ENCODE measurements at regions of chr16 and their contacts with region 1.

Region 1: GRCh38 chr16:27972500-27972899 is 91.0 kb downstream of the GSG1L start:
- DNase-seq: peak; percentile 77
- H3K4me3 Mint-ChIP-seq: no peak overlapping the region
- H3K27ac Mint-ChIP-seq: no peak overlapping the region
- H3K4me1 Mint-ChIP-seq: no peaks in the 10 kb centered on the region
- H3K27me3 Mint-ChIP-seq: peaks cover 7% of the 10 kb centered on the region

Region 2: DNA sequence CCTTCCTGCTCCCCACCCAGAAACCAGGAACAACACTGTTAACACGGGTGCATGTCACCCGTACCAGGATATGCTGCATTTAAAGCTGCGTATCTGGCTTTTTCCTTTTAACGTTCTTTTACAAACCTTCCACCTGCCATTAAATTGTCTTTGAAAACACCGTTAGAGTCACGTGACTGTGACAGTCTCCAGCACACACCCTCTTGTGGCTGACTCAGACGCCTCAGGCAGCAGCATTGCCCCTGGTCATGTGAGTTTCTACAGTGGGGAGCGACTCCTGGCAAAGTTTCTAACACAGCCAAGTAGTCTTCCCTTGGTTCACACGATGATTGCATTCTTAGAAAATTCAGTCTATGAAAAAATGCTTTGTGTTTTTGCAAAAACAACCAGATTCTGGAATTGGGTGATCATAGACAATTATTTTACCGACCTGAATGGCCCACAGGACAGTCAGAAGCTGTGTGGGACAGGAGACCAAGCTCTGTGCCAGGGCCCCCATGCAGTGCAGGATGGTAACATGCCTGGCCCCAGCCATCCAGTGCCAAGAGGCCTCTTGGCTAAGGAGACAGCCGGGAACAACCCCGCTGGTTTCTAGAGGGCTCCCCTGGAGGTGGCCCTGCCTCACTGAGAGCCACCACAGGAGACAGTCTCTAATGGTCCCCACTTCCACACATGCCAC is 223.5 kb before region 1 on chr16:
- CTCF ChIA-PET with region 1: no interaction called
- intact Hi-C with region 1: no loop called
- DNase-seq: peak; percentile 51
- H3K4me3 Mint-ChIP-seq: no peak overlapping the region
- H3K27ac Mint-ChIP-seq: no peak overlapping the region
- H3K4me1 Mint-ChIP-seq: peaks cover 4% of the 10 kb centered on the region
- H3K27me3 Mint-ChIP-seq: no peaks in the 10 kb centered on the region

Region 3: GRCh38 chr16:28067604-28068379 is 95.3 kb after region 1 on chr16:
- CTCF ChIA-PET with region 1: interaction called, 50 read pairs
- intact Hi-C with region 1: loop called (anchors 1 kb)
- DNase-seq: no peak
- H3K4me3 Mint-ChIP-seq: no peak overlapping the region
- H3K27ac Mint-ChIP-seq: no peak overlapping the region
- H3K4me1 Mint-ChIP-seq: no peaks in the 10 kb centered on the region
- H3K27me3 Mint-ChIP-seq: peaks cover 12% of the 10 kb centered on the region